ENCODE measurements at regions of chr5 and their contacts with region 1.

Region 1: DNA sequence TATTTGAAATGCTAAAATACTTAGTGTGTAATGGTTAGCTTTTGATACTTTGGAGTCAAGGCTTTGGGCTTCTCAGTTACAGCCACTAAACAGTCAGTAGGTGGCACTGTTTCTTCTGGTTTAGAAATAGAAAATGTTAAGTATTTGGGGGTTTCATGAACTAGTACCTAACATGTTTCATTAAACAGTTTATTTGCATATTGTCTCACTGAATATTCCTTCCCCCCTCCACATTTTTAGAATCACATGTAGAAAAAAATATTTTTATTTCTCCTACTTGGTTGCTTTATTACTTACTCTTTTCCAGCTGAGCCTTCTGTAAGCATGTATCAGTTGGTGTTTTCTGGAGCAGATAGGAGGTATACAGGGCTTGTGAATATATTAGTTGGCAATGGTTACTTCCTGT is 48.0 kb downstream of the IPO11 start:
- DNase-seq: peak in 1 of 2 experiments; percentile 16
- H3K4me3 ChIP-seq: no peak overlapping the region
- H3K4me3 Mint-ChIP-seq: no peak overlapping the region
- H3K27ac Mint-ChIP-seq: no peak overlapping the region
- H3K4me1 ChIP-seq: peaks cover 21% of the 10 kb centered on the region
- H3K4me1 Mint-ChIP-seq: peaks cover 12% of the 10 kb centered on the region
- H3K27me3 ChIP-seq: no peaks in the 10 kb centered on the region
- H3K27me3 Mint-ChIP-seq: no peaks in the 10 kb centered on the region
- CTCF ChIP-seq: peak; percentile 71 to 79

Region 2: GRCh38 chr5:62538017-62538942 is 77.7 kb after region 1 on chr5:
- CTCF ChIA-PET with region 1: no interaction called
- POLR2A ChIA-PET with region 1: no interaction called
- intact Hi-C with region 1: loop called (anchors 1 kb)
- DNase-seq: peak; percentile 60 to 61
- H3K4me3 ChIP-seq: no peak overlapping the region
- H3K4me3 Mint-ChIP-seq: peak overlapping the region; percentile 1
- H3K27ac Mint-ChIP-seq: peak overlapping the region; percentile 26
- H3K4me1 ChIP-seq: peaks cover 22% of the 10 kb centered on the region
- H3K4me1 Mint-ChIP-seq: peaks cover 10% of the 10 kb centered on the region
- H3K27me3 ChIP-seq: no peaks in the 10 kb centered on the region
- H3K27me3 Mint-ChIP-seq: no peaks in the 10 kb centered on the region
- CTCF ChIP-seq: no peak

Region 3: DNA sequence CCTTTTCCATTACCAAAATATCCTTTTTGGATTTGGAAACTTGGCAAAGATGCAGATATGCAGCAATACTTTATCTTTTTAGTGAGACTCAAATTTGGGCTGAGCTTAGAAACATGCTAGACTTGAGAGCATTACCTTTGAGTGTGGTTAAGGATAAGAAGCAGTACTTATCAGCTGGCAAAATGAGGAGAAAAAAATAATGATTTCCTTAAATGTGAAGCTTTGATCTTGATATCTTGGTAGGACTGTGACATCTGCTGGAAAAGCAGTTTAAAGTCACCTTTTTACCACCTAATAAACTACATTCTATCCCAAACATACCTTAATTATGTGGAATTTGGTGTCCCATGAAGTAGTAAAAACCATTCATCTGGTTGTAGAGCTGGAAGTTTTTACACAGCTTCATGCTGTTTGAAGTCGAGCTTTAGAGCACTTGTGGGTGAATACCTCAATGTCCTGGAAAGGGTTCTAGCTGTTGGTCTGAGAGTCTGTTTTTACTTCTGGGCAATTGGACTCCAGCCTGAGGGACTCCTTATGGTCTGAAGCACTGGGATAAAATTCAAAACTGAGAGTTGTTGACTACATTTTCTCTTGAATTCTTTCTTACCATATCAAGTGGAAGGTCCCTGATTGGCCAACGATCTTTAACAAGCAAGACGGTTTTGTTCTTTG is 171.5 kb after region 1 on chr5:
- CTCF ChIA-PET with region 1: no interaction called
- POLR2A ChIA-PET with region 1: no interaction called
- intact Hi-C with region 1: loop called (anchors 10 kb)
- DNase-seq: no peak
- H3K4me3 ChIP-seq: no peak overlapping the region
- H3K4me3 Mint-ChIP-seq: no peak overlapping the region
- H3K27ac Mint-ChIP-seq: no peak overlapping the region
- H3K4me1 ChIP-seq: no peaks in the 10 kb centered on the region
- H3K4me1 Mint-ChIP-seq: no peaks in the 10 kb centered on the region
- H3K27me3 ChIP-seq: no peaks in the 10 kb centered on the region
- H3K27me3 Mint-ChIP-seq: no peaks in the 10 kb centered on the region
- CTCF ChIP-seq: no peak

Region 4: DNA sequence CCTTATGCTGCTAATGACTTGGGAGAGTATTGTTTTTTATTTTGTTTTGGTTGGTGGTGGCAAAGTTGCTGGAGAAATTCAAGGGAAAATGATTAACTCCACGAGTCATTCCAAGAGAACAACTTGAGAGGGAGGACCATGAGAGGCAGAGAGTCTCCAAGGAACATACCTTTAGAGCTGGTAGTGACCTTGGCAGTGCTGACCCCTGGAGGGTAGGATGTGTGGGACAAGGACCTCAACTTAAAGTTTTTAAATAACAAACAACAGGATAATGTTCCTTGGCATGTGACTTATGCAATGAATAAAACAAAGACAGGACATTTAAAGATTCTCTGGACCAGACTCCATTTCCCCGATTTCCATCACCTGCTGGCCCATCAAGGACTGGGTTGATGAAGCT is 257.8 kb after region 1 on chr5:
- CTCF ChIA-PET with region 1: interaction called, 3 read pairs
- POLR2A ChIA-PET with region 1: no interaction called
- intact Hi-C with region 1: loop called (anchors 1 kb)
- DNase-seq: no peak
- H3K4me3 ChIP-seq: no peak overlapping the region
- H3K4me3 Mint-ChIP-seq: no peak overlapping the region
- H3K27ac Mint-ChIP-seq: no peak overlapping the region
- H3K4me1 ChIP-seq: no peaks in the 10 kb centered on the region
- H3K4me1 Mint-ChIP-seq: no peaks in the 10 kb centered on the region
- H3K27me3 ChIP-seq: no peaks in the 10 kb centered on the region
- H3K27me3 Mint-ChIP-seq: peaks cover 3% of the 10 kb centered on the region
- CTCF ChIP-seq: no peak

Region 5: GRCh38 chr5:62779010-62779422 is 318.4 kb after region 1 on chr5:
- CTCF ChIA-PET with region 1: no interaction called
- POLR2A ChIA-PET with region 1: no interaction called
- intact Hi-C with region 1: loop called (anchors 1 kb)
- DNase-seq: peak in 1 of 2 experiments; percentile 67
- H3K4me3 ChIP-seq: no peak overlapping the region
- H3K4me3 Mint-ChIP-seq: no peak overlapping the region
- H3K27ac Mint-ChIP-seq: no peak overlapping the region
- H3K4me1 ChIP-seq: no peaks in the 10 kb centered on the region
- H3K4me1 Mint-ChIP-seq: no peaks in the 10 kb centered on the region
- H3K27me3 ChIP-seq: no peaks in the 10 kb centered on the region
- H3K27me3 Mint-ChIP-seq: no peaks in the 10 kb centered on the region
- CTCF ChIP-seq: peak; percentile 75 to 78